HEK293T (cell line): ENCODE measurements at regions of chr1 and their contacts with region 1.

Region 1: DNA sequence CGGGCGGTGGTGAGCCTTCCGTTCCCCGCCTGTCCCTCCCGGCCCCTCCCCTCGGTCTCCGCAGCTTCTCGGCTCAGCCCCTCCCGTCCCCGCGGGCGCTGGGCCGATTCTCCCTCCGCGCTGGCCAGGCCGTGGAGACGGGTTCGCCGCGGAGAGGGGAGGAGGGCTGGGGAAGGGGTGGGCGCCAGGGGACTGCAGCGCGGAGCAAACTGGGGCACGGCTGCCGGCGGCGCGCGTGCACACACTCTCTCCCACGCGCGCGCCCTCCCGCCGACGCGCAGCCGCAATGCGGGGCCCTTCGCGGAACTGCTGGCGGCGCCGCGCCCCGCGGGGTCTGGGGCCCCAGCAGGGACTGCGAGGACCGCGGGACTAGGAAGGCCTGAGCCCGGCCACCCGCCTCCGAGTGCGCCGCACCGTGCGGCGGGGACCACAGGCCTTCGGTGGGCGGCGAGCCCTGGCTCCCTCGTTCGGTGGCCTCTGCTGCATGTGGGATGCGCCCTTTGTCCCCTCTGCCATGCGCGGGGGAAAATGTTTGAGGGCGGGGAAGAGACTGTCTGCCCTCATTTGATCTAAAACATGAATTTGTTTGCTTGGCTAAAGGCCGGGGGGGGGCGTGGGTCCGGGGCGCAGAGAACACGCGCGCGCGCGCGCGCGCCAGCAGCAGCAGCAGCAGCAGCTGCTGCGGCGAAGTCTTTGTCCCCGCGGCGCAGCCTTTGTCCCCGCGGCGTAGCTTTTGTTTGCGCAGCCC is 90.7 kb upstream of the VAMP3 start:
- DNase-seq: peak; percentile 68

Region 2: GRCh38 chr1:7667625-7668218 is 12.7 kb before region 1 on chr1:
- CTCF ChIA-PET with region 1: interaction called, 36 read pairs
- POLR2A ChIA-PET with region 1: no interaction called
- DNase-seq: peak; percentile 85

Region 3: GRCh38 chr1:7704214-7705047 is 24.1 kb after region 1 on chr1:
- CTCF ChIA-PET with region 1: no interaction called
- POLR2A ChIA-PET with region 1: interaction called, 12 read pairs
- DNase-seq: peak; percentile 99